GM13976 (cell line): ENCODE measurements at regions of chr20 and their contacts with region 1.

Region 1: DNA sequence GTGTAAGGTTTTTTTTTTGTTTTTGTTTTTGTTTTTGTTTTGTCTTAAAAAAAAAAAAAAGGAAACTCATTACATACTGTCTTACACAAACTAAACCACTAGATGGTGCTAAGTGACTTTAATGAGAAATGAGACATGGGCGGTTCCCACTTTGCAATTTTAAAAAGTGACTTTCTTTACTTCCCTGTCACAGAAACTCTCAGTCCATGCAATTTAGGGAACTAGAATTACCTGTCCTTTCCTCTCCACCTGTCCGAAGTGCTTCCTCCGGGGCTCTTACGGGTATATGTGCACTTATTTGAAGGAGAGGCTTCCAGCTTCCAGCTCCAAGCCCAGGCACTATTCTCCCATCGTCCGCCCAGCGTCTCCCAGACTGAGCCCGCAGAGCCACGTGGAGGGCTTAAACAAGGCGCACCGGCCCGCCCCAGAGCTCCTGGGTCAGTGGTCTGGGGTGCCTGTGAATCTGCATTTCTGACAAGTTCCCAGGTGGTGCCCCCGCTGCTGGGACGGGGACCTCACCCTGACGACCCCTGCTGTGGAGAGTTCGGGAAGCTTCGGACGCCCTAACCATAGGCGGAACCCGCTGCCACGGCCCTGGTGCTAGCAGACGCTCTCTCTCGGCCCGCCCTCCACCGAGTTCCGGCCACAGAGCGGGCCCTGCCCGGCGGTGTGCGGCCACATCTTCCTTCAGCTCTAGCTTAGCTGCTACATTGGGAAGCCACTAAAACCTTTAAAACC is 26.1 kb downstream of the BFSP1 start:
- DNase-seq: peak; percentile 74
- CTCF ChIP-seq: peak; percentile 32

Region 2: GRCh38 chr20:17029696-17030095 is 475.4 kb before region 1 on chr20:
- in situ Hi-C with region 1: no loop called
- DNase-seq: no peak
- CTCF ChIP-seq: no peak

Region 3: DNA sequence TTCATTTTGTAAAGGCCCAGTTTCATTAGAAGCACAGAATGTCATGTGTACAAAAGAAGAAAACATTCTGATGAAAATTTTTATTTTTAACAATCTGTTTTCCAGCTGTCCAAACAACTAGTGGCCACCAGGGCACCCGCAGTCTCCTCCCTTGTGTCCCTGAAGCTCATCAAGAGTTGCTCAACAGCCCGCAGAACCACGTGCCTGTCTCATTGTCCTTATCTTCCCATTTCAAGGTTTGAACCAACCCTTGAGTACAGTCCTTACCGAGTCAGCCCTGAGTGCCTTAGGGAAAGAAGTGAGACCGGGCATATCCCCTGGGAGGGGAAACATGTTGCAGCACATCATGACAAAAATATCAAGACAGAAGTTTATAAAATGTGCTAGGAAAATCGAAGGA is 767.4 kb after region 1 on chr20:
- in situ Hi-C with region 1: loop called (anchors 25 kb)
- DNase-seq: no peak
- CTCF ChIP-seq: no peak